ENCODE measurements at regions of chr2 and their contacts with region 1.

Region 1: GRCh38 chr2:106104332-106105062 is 89.6 kb downstream of the UXS1 start:
- DNase-seq: peak; percentile 92
- H3K4me3 ChIP-seq: no peak overlapping the region
- H3K27ac ChIP-seq: no peak overlapping the region
- H3K4me1 ChIP-seq: peaks cover 0 to 23% (median 13%) of the 10 kb centered on the region in 4 donors
- H3K27me3 ChIP-seq: no peaks in the 10 kb centered on the region
- CTCF ChIP-seq: peak in 2 of 3 experiments; percentile 90 to 94
- EP300 ChIP-seq: no peak
- POLR2A ChIP-seq: no peak

Region 2: DNA sequence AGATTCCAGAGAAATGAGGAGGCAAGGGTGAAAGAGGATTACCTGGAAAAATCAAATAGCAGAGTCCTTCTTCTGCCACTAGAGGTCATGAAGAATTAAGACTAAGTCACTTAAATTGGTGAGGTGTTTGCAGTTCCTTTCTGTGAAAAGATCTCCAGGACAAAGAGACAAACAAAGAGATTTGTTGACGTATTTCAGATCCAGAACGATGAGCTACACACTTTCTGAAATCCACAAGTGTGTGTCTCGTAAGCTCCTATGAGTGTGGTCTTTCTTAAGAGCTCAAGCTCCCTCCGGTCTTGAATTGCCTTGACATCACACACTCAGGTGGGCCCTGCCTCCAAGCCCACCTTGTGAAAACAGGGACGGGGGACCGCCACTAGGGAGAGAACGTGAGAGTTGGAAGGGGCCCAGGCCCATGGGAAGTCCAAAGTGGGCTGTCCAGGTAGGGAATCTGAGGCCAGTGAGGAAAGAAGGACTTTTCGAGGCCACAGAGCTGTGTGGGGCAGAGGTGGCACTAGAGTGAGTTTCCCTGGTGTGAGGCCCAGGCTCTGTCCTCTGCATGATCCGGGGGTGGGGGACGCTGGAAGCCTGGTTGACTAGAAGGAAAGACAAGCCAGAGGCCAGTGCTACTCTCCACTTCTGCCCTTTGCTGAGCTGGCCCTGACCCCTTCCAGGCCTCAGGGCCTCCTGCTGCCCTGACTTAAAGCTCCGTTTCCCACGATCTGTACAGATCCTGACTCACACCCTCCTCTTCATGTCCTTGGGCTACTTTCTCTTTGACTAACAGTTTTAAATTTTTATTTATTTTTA is 527.9 kb before region 1 on chr2:
- intact Hi-C with region 1: loop called (anchors 5 kb)
- DNase-seq: no peak
- H3K4me3 ChIP-seq: no peak overlapping the region
- H3K27ac ChIP-seq: peak overlapping the region in 3 of 4 donors; percentile 10 to 31 (median 11)
- H3K4me1 ChIP-seq: peaks cover 9 to 28% (median 24%) of the 10 kb centered on the region in 4 donors
- H3K27me3 ChIP-seq: no peaks in the 10 kb centered on the region
- CTCF ChIP-seq: peak; percentile 60 to 71 (median 61)
- EP300 ChIP-seq: no peak
- POLR2A ChIP-seq: no peak

Region 3: DNA sequence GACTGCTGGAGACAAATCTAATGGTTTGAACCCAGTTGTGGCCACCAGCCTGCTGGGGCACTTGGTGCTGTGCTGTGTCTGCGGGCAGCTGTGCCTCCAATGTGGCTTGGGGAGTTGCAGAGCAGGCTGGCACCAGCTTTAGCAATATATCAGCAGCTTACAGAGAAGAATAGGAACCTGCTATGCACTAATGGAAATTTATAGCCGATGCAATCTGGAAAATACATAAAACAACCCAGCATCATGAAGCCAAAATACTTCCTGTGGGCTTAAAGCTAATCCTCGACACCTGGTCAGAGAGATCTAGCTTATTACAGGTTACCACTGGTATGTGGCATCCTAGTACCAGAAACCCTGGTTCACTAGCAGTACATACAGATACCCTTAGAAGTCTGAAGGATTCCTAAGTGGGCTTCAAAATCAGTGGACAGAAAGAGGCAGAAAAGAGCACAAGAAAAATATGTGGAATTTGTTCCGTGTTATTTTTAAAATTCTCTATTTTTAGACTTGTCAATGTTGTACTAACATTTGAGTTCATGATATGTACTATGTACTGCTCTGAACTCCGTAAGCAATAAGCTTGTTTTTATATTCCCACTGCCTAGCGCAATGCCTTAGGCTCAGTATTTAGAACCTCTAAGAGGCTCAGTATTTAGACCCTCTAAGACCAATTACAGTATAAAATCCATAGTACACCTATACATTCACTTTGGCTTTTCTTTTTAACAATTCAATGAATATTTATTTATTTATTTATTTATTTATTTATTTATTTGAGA is 105.1 kb before region 1 on chr2:
- intact Hi-C with region 1: no loop called
- DNase-seq: peak; percentile 84
- H3K4me3 ChIP-seq: no peak overlapping the region
- H3K27ac ChIP-seq: no peak overlapping the region
- H3K4me1 ChIP-seq: no peaks in the 10 kb centered on the region
- H3K27me3 ChIP-seq: no peaks in the 10 kb centered on the region
- CTCF ChIP-seq: no peak
- EP300 ChIP-seq: no peak
- POLR2A ChIP-seq: no peak

Region 4: GRCh38 chr2:106044021-106044420 is 60.5 kb before region 1 on chr2:
- intact Hi-C with region 1: no loop called
- DNase-seq: no peak
- H3K4me3 ChIP-seq: no peak overlapping the region
- H3K27ac ChIP-seq: no peak overlapping the region
- H3K4me1 ChIP-seq: peaks cover 0 to 17% (median 11%) of the 10 kb centered on the region in 4 donors
- H3K27me3 ChIP-seq: no peaks in the 10 kb centered on the region
- CTCF ChIP-seq: no peak
- EP300 ChIP-seq: no peak
- POLR2A ChIP-seq: no peak

Region 5: GRCh38 chr2:106193977-106194778 is 89.7 kb after region 1 on chr2 and contains the start of gene UXS1:
- intact Hi-C with region 1: loop called (anchors 10 kb)
- DNase-seq: peak; percentile 99
- H3K4me3 ChIP-seq: peak within 1 kb of the TSS; percentile 94 to 98 (median 98)
- H3K27ac ChIP-seq: peak within 1 kb of the TSS; percentile 86 to 94 (median 90)
- H3K4me1 ChIP-seq: peaks cover 11 to 49% (median 46%) of the 10 kb centered on the region in 4 donors
- H3K27me3 ChIP-seq: no peaks in the 10 kb centered on the region
- CTCF ChIP-seq: peak in 1 of 3 experiments; percentile 12
- EP300 ChIP-seq: no peak
- POLR2A ChIP-seq: no peak
- total RNA-seq, gene UXS1: 31.0 to 42.4 (median 36.8) TPM

Region 6: DNA sequence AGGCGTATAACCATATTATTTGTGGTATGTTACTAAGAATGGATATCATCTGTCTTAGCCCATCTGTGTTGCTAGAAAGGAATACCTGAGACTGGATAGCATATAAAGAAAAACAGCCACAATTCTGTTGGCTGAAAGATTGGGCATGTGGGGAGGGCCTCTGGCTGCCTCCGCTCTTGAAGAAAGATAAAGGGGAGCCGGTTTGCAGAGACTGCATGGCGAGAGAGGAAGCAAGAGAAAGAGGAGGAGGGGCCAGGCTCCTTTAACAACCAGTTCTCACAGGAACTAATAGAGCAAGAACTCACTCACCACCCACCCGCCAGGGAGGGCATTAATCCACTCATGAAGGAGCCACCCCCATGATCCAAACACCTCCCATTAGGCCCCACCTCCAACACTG is 118.8 kb after region 1 on chr2:
- intact Hi-C with region 1: no loop called
- DNase-seq: no peak
- H3K4me3 ChIP-seq: no peak overlapping the region
- H3K27ac ChIP-seq: no peak overlapping the region
- H3K4me1 ChIP-seq: no peaks in the 10 kb centered on the region
- H3K27me3 ChIP-seq: no peaks in the 10 kb centered on the region
- CTCF ChIP-seq: no peak
- EP300 ChIP-seq: no peak
- POLR2A ChIP-seq: no peak

Region 7: GRCh38 chr2:106542811-106543259 is 438.3 kb after region 1 on chr2:
- intact Hi-C with region 1: loop called (anchors 5 kb)
- DNase-seq: no peak
- H3K4me3 ChIP-seq: peak overlapping the region; percentile 19 to 31 (median 26)
- H3K27ac ChIP-seq: no peak overlapping the region
- H3K4me1 ChIP-seq: peaks cover 0 to 10% (median 5%) of the 10 kb centered on the region in 4 donors
- H3K27me3 ChIP-seq: peaks cover 0 to 13% (median 0%) of the 10 kb centered on the region in 4 donors
- CTCF ChIP-seq: peak; percentile 84 to 94 (median 88)
- EP300 ChIP-seq: no peak
- POLR2A ChIP-seq: no peak

Region 8: GRCh38 chr2:106582148-106583143 is 477.9 kb after region 1 on chr2:
- intact Hi-C with region 1: loop called (anchors 2 kb)
- DNase-seq: peak; percentile 92
- H3K4me3 ChIP-seq: peak overlapping the region; percentile 37 to 52 (median 41)
- H3K27ac ChIP-seq: no peak overlapping the region
- H3K4me1 ChIP-seq: peaks cover 9 to 18% (median 14%) of the 10 kb centered on the region in 4 donors
- H3K27me3 ChIP-seq: peaks cover 0 to 28% (median 12%) of the 10 kb centered on the region in 4 donors
- CTCF ChIP-seq: peak; percentile 76 to 83 (median 80)
- EP300 ChIP-seq: no peak
- POLR2A ChIP-seq: no peak